K562 (cell line): ENCODE measurements at regions of chr12 and their contacts with region 1.

Region 1: GRCh38 chr12:64256166-64256800 is 34.2 kb upstream of the KICS2 start:
- DNase-seq: peak; percentile 12 to 68 (median 28)
- ATAC-seq: peak; percentile 85
- H3K4me3 ChIP-seq: no peak overlapping the region
- H3K27ac ChIP-seq: no peak overlapping the region
- H3K4me1 ChIP-seq: no peaks in the 10 kb centered on the region; a peak in 1 of 5 replicates
- H3K27me3 ChIP-seq: peaks cover 2 to 7% of the 10 kb centered on the region in 2 experiments; a peak in 2 of 5 replicates
- CTCF ChIP-seq: peak; percentile 37 to 87 (median 51); a peak in 3 of 6 replicates
- EP300 ChIP-seq: no peak
- POLR2A ChIP-seq: no peak
- RAD21 ChIP-seq: peak; percentile 93 to 95

Region 2: DNA sequence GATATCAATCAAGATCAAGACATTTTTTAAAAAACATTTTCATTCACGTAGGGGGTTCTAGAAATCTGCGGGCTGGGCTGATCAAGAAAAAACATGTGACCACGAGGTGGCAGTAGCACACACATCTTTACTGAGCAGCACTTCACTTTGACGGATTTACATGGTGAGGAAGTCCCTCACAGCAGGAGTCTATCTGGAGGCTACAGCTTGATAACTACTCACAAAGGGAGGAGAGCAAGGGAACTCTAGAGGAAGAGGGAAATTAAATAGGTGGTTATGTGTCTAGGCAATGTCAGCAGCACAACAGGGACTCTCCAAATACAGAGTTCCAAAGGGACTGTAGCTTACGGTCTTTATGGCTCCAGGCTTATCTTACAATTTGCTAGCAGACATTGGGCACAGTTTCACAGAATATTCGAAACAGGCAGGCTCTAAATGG is 836.1 kb before region 1 on chr12:
- CTCF ChIA-PET with region 1: no interaction called
- POLR2A ChIA-PET with region 1: no interaction called
- in situ Hi-C with region 1: loop called (anchors 25 kb)
- intact Hi-C with region 1: loop called (anchors 5 kb)
- DNase-seq: peak; percentile 59 to 81 (median 66)
- ATAC-seq: peak; percentile 97
- H3K4me3 ChIP-seq: no peak overlapping the region
- H3K27ac ChIP-seq: no peak overlapping the region
- H3K4me1 ChIP-seq: no peaks in the 10 kb centered on the region; a peak in 1 of 5 replicates
- H3K27me3 ChIP-seq: no peaks in the 10 kb centered on the region
- CTCF ChIP-seq: peak; percentile 51 to 65 (median 63)
- EP300 ChIP-seq: no peak
- POLR2A ChIP-seq: no peak
- RAD21 ChIP-seq: peak; percentile 42 to 68

Region 3: GRCh38 chr12:63826006-63826585 is 430.2 kb before region 1 on chr12:
- CTCF ChIA-PET with region 1: interaction called, 12 read pairs
- POLR2A ChIA-PET with region 1: no interaction called
- in situ Hi-C with region 1: no loop called
- intact Hi-C with region 1: loop called (anchors 1 kb)
- DNase-seq: peak in 3 of 4 experiments; percentile 20 to 36 (median 29)
- ATAC-seq: peak; percentile 70; the same call in 2 of the 3 replicates
- H3K4me3 ChIP-seq: no peak overlapping the region
- H3K27ac ChIP-seq: no peak overlapping the region
- H3K4me1 ChIP-seq: peaks cover 0 to 5% of the 10 kb centered on the region in 2 experiments; a peak in 1 of 5 replicates
- H3K27me3 ChIP-seq: peaks cover 4 to 19% of the 10 kb centered on the region in 2 experiments; a peak in 4 of 5 replicates
- CTCF ChIP-seq: peak; percentile 49 to 74 (median 65); a peak in 5 of 6 replicates
- EP300 ChIP-seq: no peak
- POLR2A ChIP-seq: no peak
- RAD21 ChIP-seq: peak; percentile 50 to 73

Region 4: GRCh38 chr12:63843721-63844390 is 412.4 kb before region 1 on chr12:
- CTCF ChIA-PET with region 1: interaction called, 16 read pairs
- POLR2A ChIA-PET with region 1: no interaction called
- in situ Hi-C with region 1: loop called (anchors 5 kb)
- intact Hi-C with region 1: loop called (anchors 1 kb)
- DNase-seq: peak; percentile 84 to 87 (median 86)
- ATAC-seq: peak; percentile 98
- H3K4me3 ChIP-seq: peak overlapping the region; percentile 50
- H3K27ac ChIP-seq: no peak overlapping the region
- H3K4me1 ChIP-seq: peaks cover 6 to 18% of the 10 kb centered on the region in 2 experiments; a peak in 4 of 5 replicates
- H3K27me3 ChIP-seq: peaks cover 25% of the 10 kb centered on the region in 2 experiments; a peak in 4 of 5 replicates
- CTCF ChIP-seq: peak; percentile 84 to 99 (median 96)
- EP300 ChIP-seq: no peak
- POLR2A ChIP-seq: no peak
- RAD21 ChIP-seq: peak; percentile 71 to 86

Region 5: GRCh38 chr12:64243809-64244208 is 12.5 kb before region 1 on chr12:
- CTCF ChIA-PET with region 1: no interaction called
- POLR2A ChIA-PET with region 1: no interaction called
- in situ Hi-C with region 1: no loop called
- intact Hi-C with region 1: no loop called
- DNase-seq: no peak
- ATAC-seq: no peak
- H3K4me3 ChIP-seq: no peak overlapping the region
- H3K27ac ChIP-seq: no peak overlapping the region
- H3K4me1 ChIP-seq: no peaks in the 10 kb centered on the region
- H3K27me3 ChIP-seq: peaks cover 4 to 8% of the 10 kb centered on the region in 2 experiments; a peak in 3 of 5 replicates
- CTCF ChIP-seq: no peak
- EP300 ChIP-seq: no peak
- POLR2A ChIP-seq: no peak
- RAD21 ChIP-seq: no peak

Region 6: DNA sequence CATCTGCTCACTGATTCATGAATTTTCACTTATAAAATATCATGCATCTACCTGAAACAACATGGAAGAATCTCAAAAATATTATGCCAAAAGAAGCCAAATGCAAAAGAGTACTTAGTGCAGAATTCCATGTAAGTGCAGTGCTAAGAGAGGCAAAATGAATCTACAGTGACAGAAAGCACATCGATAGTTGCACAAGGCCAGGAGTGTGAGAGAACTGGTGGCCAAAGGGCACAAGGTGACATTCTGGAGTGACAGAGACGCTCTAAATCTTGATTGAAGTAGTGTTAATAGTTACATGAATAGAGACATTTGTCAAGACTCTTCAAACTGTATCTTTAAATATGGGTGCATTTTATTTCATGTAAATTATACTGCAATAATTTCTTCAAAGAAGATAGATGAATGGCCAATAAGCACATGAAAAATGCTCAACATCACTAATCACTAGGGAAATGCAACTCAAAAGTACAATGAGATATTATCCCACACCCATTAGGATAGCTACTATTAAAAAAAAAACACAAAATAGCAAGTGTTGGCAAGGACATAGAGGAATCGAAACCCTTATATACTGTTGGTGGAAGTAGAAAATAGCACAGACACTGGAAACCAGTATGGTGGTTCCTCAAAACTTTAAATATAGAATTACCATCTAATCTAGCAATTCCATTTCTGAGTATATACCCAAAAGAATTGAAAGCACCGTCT is 37.5 kb after region 1 on chr12:
- CTCF ChIA-PET with region 1: no interaction called
- POLR2A ChIA-PET with region 1: no interaction called
- in situ Hi-C with region 1: no loop called
- intact Hi-C with region 1: no loop called
- DNase-seq: no peak
- ATAC-seq: no peak; the same call in 1 of the 3 replicates
- H3K4me3 ChIP-seq: no peak overlapping the region
- H3K27ac ChIP-seq: no peak overlapping the region
- H3K4me1 ChIP-seq: peaks cover 0 to 6% of the 10 kb centered on the region in 2 experiments; a peak in 2 of 5 replicates
- H3K27me3 ChIP-seq: no peaks in the 10 kb centered on the region
- CTCF ChIP-seq: no peak
- EP300 ChIP-seq: no peak
- POLR2A ChIP-seq: no peak
- RAD21 ChIP-seq: no peak